IMR-90 (cell line): ENCODE measurements at regions of chr1 and their contacts with region 1.

Region 1: GRCh38 chr1:25091658-25092057 is 140.6 kb downstream of the SYF2 start:
- DNase-seq: no peak
- ATAC-seq: no peak
- H3K4me3 ChIP-seq: no peak overlapping the region
- H3K27ac ChIP-seq: no peak overlapping the region
- H3K4me1 ChIP-seq: no peaks in the 10 kb centered on the region
- H3K27me3 ChIP-seq: peaks cover 78% of the 10 kb centered on the region
- CTCF ChIP-seq: no peak
- POLR2A ChIP-seq: no peak
- RAD21 ChIP-seq: no peak

Region 2: DNA sequence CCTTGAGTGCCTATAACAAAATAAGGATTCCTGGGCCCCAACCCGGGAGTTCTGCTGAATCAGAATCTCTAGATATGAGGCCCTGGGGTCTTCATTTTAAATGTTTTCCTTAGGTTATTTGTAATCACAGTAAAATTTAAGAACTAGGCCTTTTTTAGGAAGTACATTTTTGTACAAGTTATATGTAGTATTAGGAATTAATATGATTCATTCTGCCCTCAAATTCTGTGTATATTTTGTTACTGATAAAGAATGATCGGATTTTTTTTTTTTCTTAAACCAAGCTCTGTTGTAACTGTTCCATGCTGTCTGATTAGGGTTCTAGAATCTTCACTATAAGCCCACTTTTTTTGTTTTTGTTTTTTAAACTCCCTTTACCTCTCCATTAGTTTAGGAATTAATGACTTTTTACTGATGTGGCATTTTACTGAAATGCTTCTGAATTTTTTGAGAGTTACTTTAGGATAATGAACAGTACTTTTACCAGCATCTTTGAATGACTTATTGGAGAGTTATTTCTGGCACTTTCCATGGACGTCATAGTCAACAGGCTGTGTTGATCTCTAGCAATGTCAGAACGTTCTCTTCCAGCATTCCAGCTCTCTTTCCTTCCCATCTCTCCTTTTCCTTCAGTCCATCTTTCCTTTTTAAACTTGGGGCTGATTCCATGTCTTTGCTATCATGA is 298.1 kb before region 1 on chr1:
- CTCF ChIA-PET with region 1: no interaction called
- POLR2A ChIA-PET with region 1: no interaction called
- dilution Hi-C with region 1: no loop called
- in situ Hi-C with region 1: no loop called
- intact Hi-C with region 1: no loop called
- DNase-seq: peak; percentile 90
- ATAC-seq: peak; percentile 82
- H3K4me3 ChIP-seq: no peak overlapping the region; the same call in 1 of the 2 replicates
- H3K27ac ChIP-seq: peak overlapping the region; percentile 91; the same call in 1 of the 2 replicates
- H3K4me1 ChIP-seq: peaks cover 12% of the 10 kb centered on the region
- H3K27me3 ChIP-seq: no peaks in the 10 kb centered on the region
- CTCF ChIP-seq: no peak
- POLR2A ChIP-seq: no peak
- RAD21 ChIP-seq: no peak

Region 3: GRCh38 chr1:25080294-25081209 is 11.1 kb before region 1 on chr1:
- CTCF ChIA-PET with region 1: no interaction called
- POLR2A ChIA-PET with region 1: interaction called, 15 read pairs
- dilution Hi-C with region 1: no loop called
- in situ Hi-C with region 1: no loop called
- intact Hi-C with region 1: no loop called
- DNase-seq: peak; percentile 14
- ATAC-seq: no peak
- H3K4me3 ChIP-seq: no peak overlapping the region
- H3K27ac ChIP-seq: no peak overlapping the region
- H3K4me1 ChIP-seq: no peaks in the 10 kb centered on the region
- H3K27me3 ChIP-seq: peaks cover 44% of the 10 kb centered on the region
- CTCF ChIP-seq: no peak
- POLR2A ChIP-seq: no peak
- RAD21 ChIP-seq: no peak

Region 4: GRCh38 chr1:25771246-25772114 is 679.8 kb after region 1 on chr1:
- CTCF ChIA-PET with region 1: no interaction called
- POLR2A ChIA-PET with region 1: no interaction called
- dilution Hi-C with region 1: no loop called
- in situ Hi-C with region 1: no loop called
- intact Hi-C with region 1: no loop called
- DNase-seq: peak; percentile 5
- ATAC-seq: no peak
- H3K4me3 ChIP-seq: no peak overlapping the region
- H3K27ac ChIP-seq: no peak overlapping the region
- H3K4me1 ChIP-seq: peaks cover 4% of the 10 kb centered on the region; the same call in 1 of the 2 replicates
- H3K27me3 ChIP-seq: no peaks in the 10 kb centered on the region
- CTCF ChIP-seq: no peak
- POLR2A ChIP-seq: no peak
- RAD21 ChIP-seq: no peak